Cardiac septum (tissue), 1 donor: ENCODE measurements at regions of chr4 and their contacts with region 1.

Region 1: DNA sequence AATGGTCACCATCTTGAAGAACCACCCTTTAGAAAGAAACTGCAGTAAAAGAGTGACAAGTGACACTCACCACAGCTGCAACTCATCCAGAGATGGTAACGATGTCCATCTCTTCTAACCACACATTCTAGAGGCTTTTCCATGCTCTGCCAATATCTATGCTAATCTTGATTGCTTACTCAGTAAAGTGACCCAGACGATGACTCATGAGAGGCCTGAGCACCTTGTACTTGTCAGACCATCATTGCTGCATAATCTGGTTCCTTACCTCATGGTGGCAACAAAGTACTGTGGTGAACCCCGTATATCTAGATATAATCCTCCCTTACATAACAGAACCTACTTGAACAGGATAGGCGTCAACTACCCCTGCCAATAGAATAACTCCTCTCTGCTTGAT is 75.6 kb downstream of the CCNG2 start:
- DNase-seq: no peak

Region 2: GRCh38 chr4:77433418-77433733 is 200.7 kb after region 1 on chr4:
- intact Hi-C with region 1: loop called (anchors 10 kb)
- DNase-seq: no peak